ENCODE measurements at regions of chr1 and their contacts with region 1.

Region 1: DNA sequence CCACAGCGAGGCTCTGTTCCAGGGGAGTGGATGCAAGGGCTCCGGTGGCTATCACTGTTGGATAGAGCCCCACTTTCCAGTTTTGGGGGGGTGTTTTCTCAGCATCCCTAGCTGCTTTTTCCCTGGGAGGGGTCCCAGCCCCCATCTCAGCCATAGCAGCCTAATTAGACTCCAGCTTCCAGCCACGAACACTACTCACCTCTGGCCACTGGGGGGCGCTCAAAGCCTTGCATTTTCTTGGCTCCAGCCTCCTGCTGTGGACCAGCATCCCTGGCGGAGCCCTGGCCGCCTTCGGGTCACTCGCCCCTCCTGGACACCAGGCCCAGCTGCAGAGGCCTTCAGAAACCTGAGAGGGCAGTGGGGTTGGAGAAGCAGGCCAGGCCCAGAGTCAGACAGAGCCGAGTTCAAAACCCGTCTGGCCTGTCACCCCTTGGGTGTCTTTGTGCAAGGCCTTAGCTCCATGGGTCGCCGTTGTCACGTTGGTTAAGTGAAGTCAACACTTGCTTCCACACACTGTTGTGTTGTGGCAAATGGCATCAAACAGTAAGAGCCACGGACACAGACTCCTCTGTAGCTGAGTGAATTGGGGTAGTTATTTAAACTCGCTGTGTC is 93.5 kb upstream of the ACTL8 start:
- DNase-seq: peak; percentile 93
- H3K4me3 ChIP-seq: no peak overlapping the region; a peak in 1 of 4 replicates
- H3K27ac ChIP-seq: no peak overlapping the region
- H3K4me1 ChIP-seq: peaks cover 0 to 3% of the 10 kb centered on the region in 2 experiments; a peak in 1 of 4 replicates
- H3K27me3 ChIP-seq: no peaks in the 10 kb centered on the region
- CTCF ChIP-seq: peak; percentile 91
- EP300 ChIP-seq: no peak
- RAD21 ChIP-seq: peak; percentile 94

Region 2: GRCh38 chr1:17643861-17644703 is 17.6 kb before region 1 on chr1:
- CTCF ChIA-PET with region 1: interaction called, 49 read pairs
- POLR2A ChIA-PET with region 1: no interaction called
- DNase-seq: no peak
- H3K4me3 ChIP-seq: no peak overlapping the region
- H3K27ac ChIP-seq: no peak overlapping the region; a peak in 1 of 4 replicates
- H3K4me1 ChIP-seq: peaks cover 0 to 36% of the 10 kb centered on the region in 2 experiments; a peak in 2 of 4 replicates
- H3K27me3 ChIP-seq: no peaks in the 10 kb centered on the region
- CTCF ChIP-seq: no peak
- EP300 ChIP-seq: no peak
- RAD21 ChIP-seq: no peak

Region 3: DNA sequence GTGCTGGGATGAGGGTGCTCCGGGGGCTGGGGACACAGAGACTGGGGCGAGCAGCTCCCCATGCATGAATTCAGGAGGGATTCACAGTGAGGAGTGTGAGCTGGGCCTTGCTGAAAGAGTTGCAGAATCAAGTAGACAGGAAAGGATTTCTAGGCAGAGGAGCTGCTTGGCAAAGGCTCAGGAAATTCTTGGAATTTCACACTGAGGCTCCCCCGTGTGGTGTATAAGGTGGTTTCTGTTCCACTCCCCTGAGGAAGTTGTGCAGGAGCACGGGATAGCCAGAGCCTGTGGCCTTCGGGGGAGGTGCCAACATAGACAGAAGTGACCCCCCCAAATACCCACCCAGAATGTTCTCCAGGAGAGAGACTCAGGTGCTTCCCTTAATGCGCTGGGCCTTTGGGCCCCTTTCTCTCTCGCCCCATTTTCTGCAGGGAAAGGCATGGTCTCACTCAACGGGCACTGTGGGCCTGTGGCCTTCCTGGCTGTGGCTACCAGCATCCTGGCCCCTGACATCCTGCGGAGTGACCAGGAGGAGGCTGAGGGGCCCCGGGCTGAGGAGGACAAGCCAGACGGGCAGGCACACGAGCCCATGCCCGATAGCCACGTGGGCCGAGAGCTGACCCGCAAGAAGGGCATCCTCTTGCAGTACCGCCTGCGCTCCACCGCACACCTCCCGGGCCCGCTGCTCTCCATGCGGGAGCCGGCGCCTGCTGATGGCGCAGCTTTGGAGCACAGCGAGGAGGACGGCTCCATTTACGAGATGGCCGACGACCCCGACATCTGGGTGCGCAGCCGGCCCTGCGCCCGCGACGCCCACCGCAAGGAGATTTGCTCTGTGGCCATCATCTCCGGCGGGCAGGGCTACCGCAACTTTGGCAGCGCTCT is 35.0 kb after region 1 on chr1:
- CTCF ChIA-PET with region 1: interaction called, 37 read pairs
- POLR2A ChIA-PET with region 1: no interaction called
- DNase-seq: no peak
- H3K4me3 ChIP-seq: no peak overlapping the region; a peak in 1 of 4 replicates
- H3K27ac ChIP-seq: no peak overlapping the region
- H3K4me1 ChIP-seq: peaks cover 3 to 23% of the 10 kb centered on the region in 2 experiments; a peak in 2 of 4 replicates
- H3K27me3 ChIP-seq: no peaks in the 10 kb centered on the region
- CTCF ChIP-seq: peak; percentile 41
- EP300 ChIP-seq: no peak
- RAD21 ChIP-seq: peak; percentile 50

Region 4: DNA sequence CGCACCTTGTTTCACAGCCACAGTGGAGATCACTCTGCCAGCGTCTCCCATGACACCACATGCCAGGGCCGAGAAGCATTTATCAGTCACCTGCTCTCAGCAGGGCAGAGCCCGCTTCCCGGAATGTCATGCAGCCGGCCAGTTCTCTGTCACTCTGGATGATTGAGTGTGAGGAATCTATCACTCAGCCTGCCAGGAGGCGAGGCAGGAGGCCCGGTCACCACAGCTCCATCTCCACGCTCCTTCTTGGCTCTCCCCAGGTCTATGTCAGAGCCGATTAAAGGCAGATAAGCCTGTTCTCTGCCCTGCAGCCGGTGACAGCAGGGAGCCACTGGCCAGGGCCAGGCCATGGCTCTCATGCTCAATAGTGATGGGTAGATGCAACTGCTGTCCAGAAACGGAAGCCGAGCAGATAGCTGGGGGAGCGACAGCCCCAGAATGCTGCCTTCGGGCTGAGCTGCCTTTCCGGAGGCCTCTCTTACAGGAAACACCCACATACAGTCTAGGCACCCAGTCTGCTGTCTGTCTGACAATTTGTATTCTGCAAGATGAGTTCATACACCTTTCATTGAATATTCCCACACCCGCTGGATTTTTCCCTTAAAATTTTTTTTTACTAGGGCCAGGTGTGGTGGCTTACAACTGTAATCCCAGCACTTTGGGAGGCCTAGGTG is 157.6 kb after region 1 on chr1:
- CTCF ChIA-PET with region 1: interaction called, 13 read pairs
- POLR2A ChIA-PET with region 1: no interaction called
- DNase-seq: peak; percentile 68
- H3K4me3 ChIP-seq: no peak overlapping the region
- H3K27ac ChIP-seq: peak overlapping the region in 1 of 2 experiments; percentile 47; a peak in 1 of 4 replicates
- H3K4me1 ChIP-seq: peaks cover 0 to 8% of the 10 kb centered on the region in 2 experiments; a peak in 1 of 4 replicates
- H3K27me3 ChIP-seq: no peaks in the 10 kb centered on the region; the same call in 1 of the 2 replicates
- CTCF ChIP-seq: no peak
- EP300 ChIP-seq: no peak; a peak in 1 of 4 replicates
- RAD21 ChIP-seq: no peak

Region 5: GRCh38 chr1:17909634-17910033 is 248.0 kb after region 1 on chr1:
- CTCF ChIA-PET with region 1: interaction called, 60 read pairs
- POLR2A ChIA-PET with region 1: no interaction called
- DNase-seq: no peak
- H3K4me3 ChIP-seq: no peak overlapping the region
- H3K27ac ChIP-seq: no peak overlapping the region
- H3K4me1 ChIP-seq: no peaks in the 10 kb centered on the region; a peak in 1 of 4 replicates
- H3K27me3 ChIP-seq: no peaks in the 10 kb centered on the region
- CTCF ChIP-seq: peak; percentile 42
- EP300 ChIP-seq: no peak
- RAD21 ChIP-seq: peak; percentile 67

Region 6: DNA sequence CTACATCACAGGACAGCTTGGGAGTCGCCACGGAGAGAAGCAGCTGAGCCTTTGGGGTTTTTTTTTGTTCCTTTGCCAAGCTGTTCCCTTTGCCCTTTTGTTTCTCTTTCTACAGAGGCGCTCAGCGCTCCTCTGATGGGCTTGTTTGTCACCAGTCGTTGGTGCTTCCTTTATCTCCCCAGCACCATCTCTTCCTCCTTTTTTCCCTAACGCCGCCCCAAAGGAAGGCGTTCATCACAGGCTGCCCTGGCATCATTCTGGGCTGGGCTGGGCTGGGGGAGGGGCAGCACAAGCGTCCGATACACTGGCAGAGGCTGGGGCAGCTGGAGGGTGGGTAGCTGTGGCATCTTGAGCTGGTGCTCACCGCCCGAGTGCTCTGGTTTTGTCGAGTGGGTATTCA is 456.4 kb after region 1 on chr1:
- CTCF ChIA-PET with region 1: no interaction called
- POLR2A ChIA-PET with region 1: no interaction called
- DNase-seq: no peak
- H3K4me3 ChIP-seq: no peak overlapping the region
- H3K27ac ChIP-seq: no peak overlapping the region
- H3K4me1 ChIP-seq: no peaks in the 10 kb centered on the region; a peak in 1 of 4 replicates
- H3K27me3 ChIP-seq: no peaks in the 10 kb centered on the region
- CTCF ChIP-seq: no peak
- EP300 ChIP-seq: no peak
- RAD21 ChIP-seq: no peak

Region 7: GRCh38 chr1:18575620-18576019 is 914.0 kb after region 1 on chr1:
- CTCF ChIA-PET with region 1: interaction called, 38 read pairs
- POLR2A ChIA-PET with region 1: no interaction called
- DNase-seq: peak; percentile 80
- H3K4me3 ChIP-seq: no peak overlapping the region; a peak in 1 of 4 replicates
- H3K27ac ChIP-seq: no peak overlapping the region
- H3K4me1 ChIP-seq: no peaks in the 10 kb centered on the region
- H3K27me3 ChIP-seq: no peaks in the 10 kb centered on the region
- CTCF ChIP-seq: peak; percentile 66
- EP300 ChIP-seq: no peak
- RAD21 ChIP-seq: peak; percentile 78